Activated CD8-positive, alpha-beta T cell treated with anti-CD3 and anti-CD28 coated beads, Interleukin-2, amount 10 ng/mL, durations not matched to agents 7 days and 5 days (primary cell): ENCODE measurements at regions of chr4 and their contacts with region 1.

Region 1: DNA sequence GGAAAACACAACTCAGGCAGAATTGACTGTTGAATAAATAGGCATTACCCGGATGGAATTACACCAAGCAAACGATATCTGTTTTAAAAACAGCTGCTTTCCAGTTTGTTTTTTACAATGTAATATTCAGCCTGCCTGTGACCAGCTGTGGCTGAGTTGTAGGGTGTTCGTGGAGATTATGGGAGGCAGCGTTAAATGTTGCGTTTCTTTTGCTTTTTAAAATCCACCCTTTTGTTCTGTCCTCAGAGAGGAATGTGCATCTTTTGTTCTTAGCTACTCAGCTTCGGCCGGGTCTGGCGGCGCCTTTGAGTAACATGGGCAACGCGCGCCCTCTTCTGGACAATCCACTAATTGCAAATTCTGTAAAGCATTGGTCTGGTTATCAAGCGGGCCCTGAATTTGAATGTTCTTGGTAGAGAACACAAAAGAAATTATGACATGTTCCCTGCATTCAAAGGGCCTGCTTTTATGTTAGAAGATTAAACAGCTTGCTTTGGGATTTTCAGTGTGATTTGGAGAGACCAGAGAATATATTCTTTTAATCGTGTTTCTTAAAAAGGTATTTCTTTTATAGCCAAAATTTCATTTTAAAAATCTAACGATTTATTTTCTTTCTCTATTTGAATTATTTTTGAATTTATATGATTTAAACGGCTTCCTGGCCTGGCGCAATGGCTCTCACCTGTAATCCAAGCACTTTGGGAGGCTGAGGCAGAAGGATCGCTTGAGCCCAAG is 76.3 kb upstream of the TRIM2 start:
- DNase-seq: peak; percentile 91
- ATAC-seq: peak; percentile 88
- H3K4me3 Mint-ChIP-seq: no peak overlapping the region
- H3K27ac Mint-ChIP-seq: no peak overlapping the region
- H3K4me1 Mint-ChIP-seq: peaks cover 7% of the 10 kb centered on the region
- H3K27me3 Mint-ChIP-seq: peaks cover 22% of the 10 kb centered on the region

Region 2: DNA sequence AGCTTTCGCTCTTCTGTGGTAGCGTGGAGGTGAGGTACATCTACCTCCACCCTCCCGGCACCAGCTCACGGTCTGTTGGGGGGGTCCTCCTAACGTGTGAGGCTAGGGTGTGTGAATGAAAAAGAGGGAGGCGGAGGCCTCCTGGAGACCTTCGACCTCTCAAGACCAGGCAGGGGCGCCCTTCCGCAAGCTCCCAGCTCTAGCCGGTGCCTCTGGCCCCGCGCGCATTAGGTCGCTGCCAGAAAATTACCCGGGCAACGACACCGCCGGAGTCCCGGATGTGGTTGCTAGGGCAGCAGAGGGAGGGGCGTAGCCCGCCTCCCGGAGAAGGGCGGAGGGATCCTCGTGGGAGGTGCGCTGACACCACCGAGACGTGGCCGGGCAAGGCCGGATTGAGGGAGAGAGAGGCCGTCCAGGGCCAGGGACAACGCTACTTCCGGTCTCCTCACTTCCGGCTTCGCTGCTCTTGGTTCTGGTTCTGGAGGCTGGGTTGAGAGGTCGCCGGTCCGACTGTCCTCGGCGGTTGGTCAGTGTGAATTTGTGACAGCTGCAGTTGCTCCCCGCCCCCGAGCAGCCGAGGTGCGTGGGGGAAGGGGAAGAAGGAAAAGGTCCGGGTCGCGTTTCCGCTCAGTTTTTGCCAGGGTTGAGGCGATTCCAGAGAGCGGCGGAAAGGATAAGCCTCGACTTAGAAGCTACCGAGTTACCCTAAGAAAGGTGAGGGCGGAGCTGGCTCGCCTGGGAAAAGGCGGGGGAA is 348.2 kb before region 1 on chr4 and contains the starts of genes ARFIP1 and TIGD4:
- CTCF ChIA-PET with region 1: interaction called, 10 read pairs
- POLR2A ChIA-PET with region 1: no interaction called
- DNase-seq: peak; percentile 97
- ATAC-seq: peak; percentile 90
- H3K4me3 Mint-ChIP-seq: peak within 1 kb of the TSS; percentile 92
- H3K27ac Mint-ChIP-seq: peak within 1 kb of the TSS; percentile 90
- H3K4me1 Mint-ChIP-seq: peaks cover 40% of the 10 kb centered on the region
- H3K27me3 Mint-ChIP-seq: peaks cover 12% of the 10 kb centered on the region
- total RNA-seq, gene ARFIP1: 20.3 to 20.5 TPM
- total RNA-seq, gene TIGD4: 0.40 to 0.44 TPM

Region 3: GRCh38 chr4:153074936-153075630 is 52.8 kb before region 1 on chr4:
- CTCF ChIA-PET with region 1: interaction called, 323 read pairs
- POLR2A ChIA-PET with region 1: interaction called, 3 read pairs
- DNase-seq: no peak
- ATAC-seq: no peak
- H3K4me3 Mint-ChIP-seq: no peak overlapping the region
- H3K27ac Mint-ChIP-seq: no peak overlapping the region
- H3K4me1 Mint-ChIP-seq: peaks cover 8% of the 10 kb centered on the region
- H3K27me3 Mint-ChIP-seq: peaks cover 36% of the 10 kb centered on the region

Region 4: GRCh38 chr4:153089742-153090141 is 38.2 kb before region 1 on chr4:
- CTCF ChIA-PET with region 1: interaction called, 323 read pairs
- POLR2A ChIA-PET with region 1: no interaction called
- DNase-seq: no peak
- ATAC-seq: no peak
- H3K4me3 Mint-ChIP-seq: no peak overlapping the region
- H3K27ac Mint-ChIP-seq: no peak overlapping the region
- H3K4me1 Mint-ChIP-seq: peaks cover 12% of the 10 kb centered on the region
- H3K27me3 Mint-ChIP-seq: peaks cover 18% of the 10 kb centered on the region

Region 5: GRCh38 chr4:153115322-153116290 is 12.3 kb before region 1 on chr4:
- CTCF ChIA-PET with region 1: interaction called, 108 read pairs
- POLR2A ChIA-PET with region 1: interaction called, 3 read pairs
- DNase-seq: peak; percentile 88
- ATAC-seq: peak; percentile 76
- H3K4me3 Mint-ChIP-seq: peak overlapping the region; percentile 37
- H3K27ac Mint-ChIP-seq: no peak overlapping the region
- H3K4me1 Mint-ChIP-seq: peaks cover 6% of the 10 kb centered on the region
- H3K27me3 Mint-ChIP-seq: peaks cover 20% of the 10 kb centered on the region